CD4-positive, alpha-beta T cell (primary cell): ENCODE measurements at regions of chr6 and their contacts with region 1.

Region 1: GRCh38 chr6:170306324-170307079 is at the start of gene FAM120B:
- DNase-seq: peak; percentile 91 to 99 (median 95)
- ATAC-seq: peak; percentile 95
- H3K4me3 ChIP-seq: peak within 1 kb of the TSS; percentile 91
- H3K4me3 Mint-ChIP-seq: peak within 1 kb of the TSS; percentile 93
- H3K27ac ChIP-seq: peak within 1 kb of the TSS; percentile 76 to 80
- H3K27ac Mint-ChIP-seq: peak within 1 kb of the TSS; percentile 87
- H3K4me1 ChIP-seq: peaks cover 37% of the 10 kb centered on the region
- H3K4me1 Mint-ChIP-seq: peaks cover 51% of the 10 kb centered on the region
- H3K27me3 ChIP-seq: no peaks in the 10 kb centered on the region
- H3K27me3 Mint-ChIP-seq: peaks cover 22% of the 10 kb centered on the region
- CTCF ChIP-seq: no peak
- total RNA-seq, gene FAM120B: 24.1 to 26.7 TPM

Region 2: GRCh38 chr6:169212897-169213813 is 1093.3 kb before region 1 on chr6:
- CTCF ChIA-PET with region 1: no interaction called
- POLR2A ChIA-PET with region 1: no interaction called
- intact Hi-C with region 1: loop called in 1 of 2 experiments (anchors 5 kb)
- DNase-seq: peak; percentile 77 to 95 (median 85)
- ATAC-seq: peak; percentile 98
- H3K4me3 ChIP-seq: peak overlapping the region; percentile 35
- H3K4me3 Mint-ChIP-seq: peak overlapping the region; percentile 78
- H3K27ac ChIP-seq: no peak overlapping the region
- H3K27ac Mint-ChIP-seq: peak overlapping the region; percentile 79
- H3K4me1 ChIP-seq: peaks cover 12% of the 10 kb centered on the region
- H3K4me1 Mint-ChIP-seq: peaks cover 25% of the 10 kb centered on the region
- H3K27me3 ChIP-seq: no peaks in the 10 kb centered on the region
- H3K27me3 Mint-ChIP-seq: no peaks in the 10 kb centered on the region
- CTCF ChIP-seq: no peak

Region 3: DNA sequence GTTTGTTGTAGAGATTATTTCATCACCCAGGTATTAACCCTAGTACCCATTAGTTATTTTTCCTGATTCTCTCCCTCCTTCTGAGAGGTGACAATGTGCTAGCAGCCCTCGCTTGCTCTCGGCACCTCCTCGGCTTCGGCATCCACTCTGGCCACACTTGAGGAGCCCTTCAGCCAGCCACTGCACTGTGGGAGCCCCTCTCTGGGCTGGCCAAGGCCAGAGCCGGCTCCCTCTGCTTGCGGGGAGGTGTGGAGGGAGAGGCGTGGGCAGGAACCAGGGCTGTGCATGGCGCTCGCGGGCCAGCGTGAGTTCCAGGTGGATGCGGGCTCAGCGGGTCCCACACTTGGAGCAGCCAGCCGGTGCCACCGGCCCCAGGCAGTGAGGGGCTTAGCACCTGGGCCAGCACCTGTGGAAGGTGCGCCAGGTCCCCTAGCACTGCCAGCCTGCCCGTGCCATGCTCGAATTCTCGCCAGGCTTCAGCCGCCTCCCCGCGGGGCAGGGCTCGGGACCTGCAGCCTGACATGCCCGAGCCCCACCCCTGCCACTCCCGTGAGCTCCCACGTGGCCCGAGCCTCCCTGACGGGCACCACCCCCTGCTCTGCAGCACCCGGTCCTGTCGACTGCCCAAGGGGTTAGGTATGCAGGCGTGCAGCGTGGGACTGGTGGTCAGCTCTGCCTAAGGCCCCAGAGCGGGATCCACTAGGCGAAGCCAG is 826.6 kb before region 1 on chr6:
- CTCF ChIA-PET with region 1: no interaction called
- POLR2A ChIA-PET with region 1: no interaction called
- intact Hi-C with region 1: no loop called
- DNase-seq: no peak
- ATAC-seq: no peak
- H3K4me3 ChIP-seq: no peak overlapping the region
- H3K4me3 Mint-ChIP-seq: no peak overlapping the region
- H3K27ac ChIP-seq: no peak overlapping the region
- H3K27ac Mint-ChIP-seq: no peak overlapping the region
- H3K4me1 ChIP-seq: no peaks in the 10 kb centered on the region
- H3K4me1 Mint-ChIP-seq: no peaks in the 10 kb centered on the region
- H3K27me3 ChIP-seq: no peaks in the 10 kb centered on the region
- H3K27me3 Mint-ChIP-seq: no peaks in the 10 kb centered on the region
- CTCF ChIP-seq: no peak

Region 4: DNA sequence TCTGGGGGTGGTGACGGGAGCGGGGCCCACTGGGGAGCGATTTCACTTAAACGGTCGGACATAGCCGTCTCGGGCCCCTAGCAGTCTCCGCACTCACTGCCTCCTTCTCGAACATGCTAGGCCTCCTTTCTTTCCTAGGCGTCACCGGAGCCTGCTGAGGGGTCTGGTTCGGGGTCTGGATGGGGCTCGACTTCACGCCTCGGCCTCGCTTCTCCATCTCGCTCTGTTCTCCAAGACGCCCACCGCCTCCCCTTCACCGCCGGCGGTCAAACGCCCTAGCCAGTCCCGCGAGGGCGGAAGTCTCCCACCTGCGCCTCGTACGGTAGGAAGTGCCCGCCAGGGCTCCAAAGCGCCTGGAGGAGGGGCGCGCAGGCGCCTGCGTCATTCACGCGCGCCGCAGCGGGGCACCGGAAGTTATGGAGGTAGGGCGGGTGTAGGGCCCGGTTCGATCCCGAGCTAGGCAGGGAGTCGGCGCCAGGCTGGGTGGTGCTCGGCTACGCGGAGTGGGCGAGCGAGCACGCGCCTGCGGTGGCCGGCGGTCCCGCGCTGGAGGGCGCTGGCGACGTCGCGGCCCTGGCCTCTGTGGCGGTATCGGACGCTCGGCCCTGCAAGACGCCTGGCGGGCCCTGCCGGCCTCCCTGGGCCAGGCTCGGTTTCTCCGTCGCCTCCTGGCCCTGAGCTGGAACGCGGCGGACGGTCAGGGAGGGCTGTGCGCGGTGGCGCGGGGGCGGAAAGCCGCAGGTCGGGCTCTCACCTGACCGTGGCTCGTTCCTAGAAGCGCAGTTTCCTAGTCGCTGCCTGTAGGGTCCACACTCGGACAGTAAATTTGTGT is 555.0 kb before region 1 on chr6 and contains the starts of genes DYNLT2 and ERMARD:
- CTCF ChIA-PET with region 1: no interaction called
- POLR2A ChIA-PET with region 1: no interaction called
- intact Hi-C with region 1: loop called in 1 of 2 experiments (anchors 5 kb)
- DNase-seq: peak; percentile 85 to 96 (median 91)
- ATAC-seq: peak; percentile 93
- H3K4me3 ChIP-seq: peak within 1 kb of the TSS; percentile 87
- H3K4me3 Mint-ChIP-seq: peak within 1 kb of the TSS; percentile 99
- H3K27ac ChIP-seq: peak within 1 kb of the TSS; percentile 92 to 94
- H3K27ac Mint-ChIP-seq: peak within 1 kb of the TSS; percentile 100
- H3K4me1 ChIP-seq: peaks cover 14% of the 10 kb centered on the region
- H3K4me1 Mint-ChIP-seq: peaks cover 39% of the 10 kb centered on the region
- H3K27me3 ChIP-seq: no peaks in the 10 kb centered on the region
- H3K27me3 Mint-ChIP-seq: no peaks in the 10 kb centered on the region
- CTCF ChIP-seq: no peak
- total RNA-seq, gene DYNLT2: 4.1 to 4.3 TPM
- total RNA-seq, gene ERMARD: 24.2 to 26.2 TPM

Region 5: GRCh38 chr6:170271771-170272314 is 34.7 kb before region 1 on chr6:
- CTCF ChIA-PET with region 1: no interaction called
- POLR2A ChIA-PET with region 1: interaction called, 22 read pairs
- intact Hi-C with region 1: loop called (anchors 2 to 5 kb)
- DNase-seq: peak; percentile 38 to 92 (median 72)
- ATAC-seq: peak; percentile 88
- H3K4me3 ChIP-seq: peak overlapping the region; percentile 56
- H3K4me3 Mint-ChIP-seq: peak overlapping the region; percentile 86
- H3K27ac ChIP-seq: peak overlapping the region; percentile 29 to 65
- H3K27ac Mint-ChIP-seq: peak overlapping the region; percentile 92
- H3K4me1 ChIP-seq: peaks cover 30% of the 10 kb centered on the region
- H3K4me1 Mint-ChIP-seq: peaks cover 22% of the 10 kb centered on the region
- H3K27me3 ChIP-seq: peaks cover 0 to 2% of the 10 kb centered on the region in 2 experiments
- H3K27me3 Mint-ChIP-seq: no peaks in the 10 kb centered on the region
- CTCF ChIP-seq: no peak

Region 6: DNA sequence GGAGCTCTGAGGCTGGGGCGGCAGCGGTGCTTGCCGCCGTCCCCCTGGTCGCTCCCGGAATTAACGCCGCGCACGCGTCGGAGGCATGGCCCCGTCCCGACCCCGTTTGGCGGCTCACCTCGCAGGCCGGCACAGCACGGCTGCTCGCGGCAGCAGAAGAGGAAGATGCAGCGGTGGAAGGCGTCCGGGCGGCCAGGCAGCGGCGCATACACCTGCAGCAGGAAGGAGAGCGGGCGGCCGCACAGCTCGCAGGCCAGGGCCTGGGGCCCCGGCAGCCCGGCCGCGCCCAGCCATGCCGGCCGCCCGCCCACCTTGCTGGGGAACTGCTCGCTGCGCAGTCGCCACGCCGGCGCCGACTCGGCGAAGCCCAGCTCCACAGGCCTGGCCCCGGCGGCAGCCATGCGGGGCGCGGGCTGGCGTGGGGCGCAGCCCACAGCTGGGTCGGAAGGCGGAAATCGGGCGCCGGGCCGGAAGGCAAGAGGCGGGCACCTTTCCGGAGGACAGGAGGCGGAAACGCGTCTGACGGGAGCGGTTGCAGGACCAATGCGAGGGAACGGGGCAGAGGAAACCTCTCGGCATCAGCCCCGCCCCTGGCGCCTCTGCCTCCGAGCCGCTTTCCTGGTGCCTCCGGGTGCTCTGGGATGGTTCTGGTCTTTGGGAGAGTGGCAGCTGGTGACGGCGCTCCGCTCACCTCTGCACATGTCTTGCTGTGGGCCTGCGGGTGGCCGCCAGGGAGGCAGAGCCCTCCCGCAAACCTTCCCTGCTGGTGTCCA is 277.9 kb after region 1 on chr6 and contains the start of gene PDCD2:
- CTCF ChIA-PET with region 1: no interaction called
- POLR2A ChIA-PET with region 1: interaction called, 3 read pairs
- intact Hi-C with region 1: loop called in 1 of 2 experiments (anchors 5 kb)
- DNase-seq: peak; percentile 82 to 96 (median 88)
- ATAC-seq: peak; percentile 94
- H3K4me3 ChIP-seq: peak within 1 kb of the TSS; percentile 74
- H3K4me3 Mint-ChIP-seq: peak within 1 kb of the TSS; percentile 97
- H3K27ac ChIP-seq: peak within 1 kb of the TSS; percentile 69 to 92
- H3K27ac Mint-ChIP-seq: peak within 1 kb of the TSS; percentile 96
- H3K4me1 ChIP-seq: peaks cover 15% of the 10 kb centered on the region
- H3K4me1 Mint-ChIP-seq: peaks cover 38% of the 10 kb centered on the region
- H3K27me3 ChIP-seq: no peaks in the 10 kb centered on the region
- H3K27me3 Mint-ChIP-seq: no peaks in the 10 kb centered on the region
- CTCF ChIP-seq: no peak
- total RNA-seq, gene PDCD2: 56.9 to 57.1 TPM